ENCODE measurements at regions of chr19 and their contacts with region 1.

Region 1: DNA sequence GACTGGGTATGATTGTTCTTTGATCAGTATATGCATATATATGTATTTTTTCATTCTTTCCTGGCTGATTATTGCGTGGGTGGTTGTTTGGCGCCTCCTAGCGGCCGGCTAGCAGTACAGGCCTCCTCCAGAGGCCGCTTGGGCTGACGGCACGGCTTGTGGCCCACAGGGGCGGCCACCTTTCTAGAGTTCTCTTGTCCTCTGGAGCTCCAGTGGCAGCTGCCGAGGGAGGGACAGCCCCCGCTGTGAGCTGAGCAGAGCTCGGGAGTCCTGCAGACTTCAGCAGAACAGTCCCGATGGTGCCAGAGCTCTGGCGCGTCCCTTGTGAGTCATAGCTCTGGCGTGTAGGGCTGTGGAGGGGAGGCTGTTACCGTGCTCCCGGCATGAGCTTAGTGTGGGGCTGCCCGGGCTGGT is 22.5 kb upstream of the ZNF429 start:
- DNase-seq: peak; percentile 72
- ATAC-seq: peak; percentile 92

Region 2: GRCh38 chr19:21202865-21203494 is 279.9 kb before region 1 on chr19:
- intact Hi-C with region 1: loop called (anchors 10 kb)
- DNase-seq: no peak
- ATAC-seq: peak; percentile 62

Region 3: GRCh38 chr19:21269813-21270212 is 213.1 kb before region 1 on chr19:
- intact Hi-C with region 1: no loop called
- DNase-seq: no peak
- ATAC-seq: no peak

Region 4: DNA sequence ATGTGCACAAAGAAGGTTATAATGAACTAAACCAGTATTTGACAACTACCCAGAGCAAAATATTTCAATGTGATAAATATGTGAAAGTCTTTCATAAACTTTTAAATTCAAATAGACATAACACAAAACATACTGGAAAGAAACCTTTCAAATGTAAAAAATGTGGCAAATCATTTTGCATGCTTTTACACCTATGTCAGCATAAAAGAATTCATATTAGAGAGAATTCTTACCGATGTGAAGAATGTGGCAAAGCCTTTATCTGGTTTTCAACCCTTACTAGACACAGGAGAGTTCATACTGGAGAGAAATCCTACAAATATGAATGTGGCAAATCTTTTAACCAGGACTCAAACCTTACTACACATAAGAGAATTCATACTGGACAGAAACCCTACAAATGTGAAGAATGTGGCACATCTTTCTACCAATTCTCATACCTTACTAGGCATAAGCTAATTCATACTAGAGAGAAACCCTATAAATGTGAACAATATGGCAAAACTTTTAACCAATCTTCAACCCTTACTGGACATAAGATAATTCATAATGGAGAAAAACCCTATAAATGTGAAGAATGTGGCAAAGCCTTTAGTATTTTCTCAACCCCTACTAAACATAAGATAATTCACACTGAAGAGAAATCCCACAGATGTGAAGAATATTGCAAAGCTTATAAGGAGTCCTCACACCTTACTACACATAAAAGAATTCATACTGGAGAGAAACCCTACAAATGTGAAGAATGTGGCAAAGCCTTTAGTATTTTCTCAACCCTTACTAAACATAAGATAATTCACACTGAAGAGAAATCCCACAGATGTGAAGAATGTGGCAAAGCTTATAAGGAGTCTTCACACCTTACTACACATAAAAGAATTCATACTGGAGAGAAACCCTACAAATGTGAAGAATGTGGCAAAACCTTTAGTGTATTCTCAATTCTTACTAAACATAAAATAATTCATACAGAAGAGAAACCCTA is 59.5 kb before region 1 on chr19:
- intact Hi-C with region 1: no loop called
- DNase-seq: no peak
- ATAC-seq: no peak

Region 5: GRCh38 chr19:21593934-21594820 is 111.3 kb after region 1 on chr19:
- intact Hi-C with region 1: no loop called
- DNase-seq: peak; percentile 51
- ATAC-seq: peak; percentile 33

Region 6: DNA sequence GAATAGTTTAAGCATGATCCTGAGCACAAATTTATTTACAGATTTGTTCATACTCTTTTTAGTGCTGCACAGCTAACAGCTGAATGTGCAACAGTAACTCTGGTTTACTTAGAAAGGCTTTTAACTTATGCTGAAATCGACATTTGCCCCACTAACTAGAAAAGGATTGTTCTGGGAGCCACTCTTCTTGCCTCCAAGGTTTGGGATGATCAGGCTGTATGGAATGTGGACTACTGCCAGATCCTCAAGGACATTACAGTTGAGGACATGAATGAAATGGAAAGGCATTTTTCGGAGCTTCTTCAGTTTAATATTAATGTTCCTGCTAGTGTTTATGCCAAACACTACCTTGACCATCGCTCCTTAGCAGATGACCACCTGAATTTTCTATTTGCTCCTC is 268.5 kb after region 1 on chr19:
- intact Hi-C with region 1: no loop called
- DNase-seq: no peak
- ATAC-seq: peak; percentile 38